ENCODE measurements at regions of chr6 and their contacts with region 1.

Region 1: DNA sequence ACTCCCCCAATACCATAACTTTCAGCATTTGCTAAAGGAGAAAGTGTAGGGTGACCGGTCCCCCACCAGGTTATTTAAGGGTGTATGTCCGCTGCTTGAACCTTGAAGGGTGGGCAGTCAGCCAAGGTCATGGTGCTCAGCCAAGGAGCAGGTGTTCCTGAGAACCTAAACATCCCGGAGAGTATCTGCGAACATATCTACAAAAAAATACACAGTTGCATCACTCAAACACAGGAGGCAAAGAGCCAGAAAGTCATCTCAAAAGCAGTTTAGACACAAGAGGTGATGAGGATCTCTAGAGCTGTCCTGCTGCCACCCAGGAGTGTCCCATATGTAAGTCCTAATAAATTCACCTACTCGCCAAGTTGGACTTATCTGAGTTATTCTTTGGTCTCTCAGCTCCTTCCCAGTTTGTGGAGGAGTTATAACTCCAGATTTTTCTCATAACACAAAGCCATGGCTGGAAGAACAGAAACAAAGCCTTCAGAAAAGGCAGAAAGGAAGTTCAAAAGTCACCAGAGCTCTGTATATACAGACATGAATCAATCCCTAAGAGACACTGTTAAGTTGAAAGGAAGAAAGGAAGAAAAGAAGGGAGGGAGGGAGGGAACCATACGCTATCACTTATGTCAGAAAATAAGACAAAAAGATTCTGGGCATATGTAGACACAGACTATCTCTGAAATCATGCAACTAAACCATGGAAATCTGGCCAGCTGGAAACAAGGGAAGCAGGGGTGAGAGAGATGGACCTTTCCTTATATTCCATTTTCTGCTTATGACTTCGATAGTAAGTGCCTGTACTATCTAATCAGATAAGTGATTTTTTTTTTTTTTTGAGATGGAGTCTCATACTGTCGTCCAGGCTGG is 11.3 kb downstream of the MBOAT1 start:
- DNase-seq: no peak
- H3K4me3 ChIP-seq: no peak overlapping the region
- H3K27ac ChIP-seq: peak overlapping the region; percentile 57
- H3K4me1 ChIP-seq: peaks cover 16% of the 10 kb centered on the region
- H3K27me3 ChIP-seq: no peaks in the 10 kb centered on the region
- CTCF ChIP-seq: no peak

Region 2: DNA sequence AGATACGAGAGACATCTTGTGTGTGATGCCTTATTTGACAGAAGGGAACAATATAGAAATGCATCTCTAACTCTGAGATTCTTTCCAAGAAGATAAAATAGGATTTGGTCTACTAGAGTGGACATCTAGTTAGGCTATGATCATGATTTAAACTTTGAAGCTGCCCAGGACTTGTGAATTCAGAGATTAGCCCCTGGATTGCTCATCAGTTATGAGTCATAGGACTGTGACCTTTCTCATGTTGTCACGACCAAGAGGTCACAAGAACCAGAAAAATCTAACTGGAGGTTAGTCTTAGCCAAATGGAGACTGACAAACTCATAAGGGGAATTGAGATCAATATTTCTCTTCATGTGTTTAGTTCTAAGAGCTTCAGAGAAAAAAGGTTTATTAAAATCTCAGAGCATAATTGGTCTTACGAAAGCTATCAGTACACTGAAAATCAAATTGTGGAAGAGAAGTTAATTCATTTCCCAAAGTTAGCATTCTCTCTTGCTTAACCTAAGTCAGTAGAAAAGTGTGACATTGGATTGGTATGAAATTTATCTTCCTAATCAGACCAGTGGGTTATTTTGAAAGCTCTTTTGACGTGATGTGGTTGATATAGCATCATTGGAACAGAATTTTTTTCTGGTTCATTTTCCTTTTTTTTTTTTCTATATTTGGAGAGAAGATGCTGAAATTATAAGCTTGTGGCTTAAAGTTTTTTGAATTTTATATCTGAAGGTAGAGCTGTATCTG is 1568.2 kb before region 1 on chr6:
- CTCF ChIA-PET with region 1: no interaction called
- POLR2A ChIA-PET with region 1: no interaction called
- intact Hi-C with region 1: no loop called
- DNase-seq: no peak
- H3K4me3 ChIP-seq: no peak overlapping the region
- H3K27ac ChIP-seq: no peak overlapping the region
- H3K4me1 ChIP-seq: 0 out of 2 replicates have a peak, but pooled peaks cover 9% of the 10 kb centered on the region
- H3K27me3 ChIP-seq: no peaks in the 10 kb centered on the region
- CTCF ChIP-seq: no peak

Region 3: GRCh38 chr6:20180935-20181334 is 20.1 kb before region 1 on chr6:
- CTCF ChIA-PET with region 1: no interaction called
- POLR2A ChIA-PET with region 1: interaction called, 11 read pairs
- intact Hi-C with region 1: no loop called
- DNase-seq: no peak
- H3K4me3 ChIP-seq: no peak overlapping the region
- H3K27ac ChIP-seq: no peak overlapping the region
- H3K4me1 ChIP-seq: 0 out of 2 replicates have a peak, but pooled peaks cover 11% of the 10 kb centered on the region
- H3K27me3 ChIP-seq: no peaks in the 10 kb centered on the region
- CTCF ChIP-seq: no peak

Region 4: GRCh38 chr6:21769405-21769861 is 1568.4 kb after region 1 on chr6:
- CTCF ChIA-PET with region 1: no interaction called
- POLR2A ChIA-PET with region 1: interaction called, 12 read pairs
- intact Hi-C with region 1: no loop called
- DNase-seq: no peak
- H3K4me3 ChIP-seq: no peak overlapping the region
- H3K27ac ChIP-seq: no peak overlapping the region
- H3K4me1 ChIP-seq: peaks cover 40% of the 10 kb centered on the region
- H3K27me3 ChIP-seq: no peaks in the 10 kb centered on the region
- CTCF ChIP-seq: no peak

Region 5: GRCh38 chr6:22098601-22099031 is 1897.6 kb after region 1 on chr6:
- CTCF ChIA-PET with region 1: no interaction called
- POLR2A ChIA-PET with region 1: interaction called, 14 read pairs
- intact Hi-C with region 1: no loop called
- DNase-seq: no peak
- H3K4me3 ChIP-seq: no peak overlapping the region
- H3K27ac ChIP-seq: no peak overlapping the region
- H3K4me1 ChIP-seq: no peaks in the 10 kb centered on the region
- H3K27me3 ChIP-seq: no peaks in the 10 kb centered on the region
- CTCF ChIP-seq: no peak

Measured in PC-9 (cell line).